Left ventricle myocardium superior (tissue), 1 donor: ENCODE measurements at regions of chr1 and their contacts with region 1.

Region 1: GRCh38 chr1:61097317-61097716 is 15.0 kb downstream of the NFIA start:
- DNase-seq: no peak
- ATAC-seq: no peak

Region 2: GRCh38 chr1:61013189-61013945 is 84.0 kb before region 1 on chr1:
- intact Hi-C with region 1: no loop called
- DNase-seq: peak; percentile 58
- ATAC-seq: peak; percentile 93

Region 3: DNA sequence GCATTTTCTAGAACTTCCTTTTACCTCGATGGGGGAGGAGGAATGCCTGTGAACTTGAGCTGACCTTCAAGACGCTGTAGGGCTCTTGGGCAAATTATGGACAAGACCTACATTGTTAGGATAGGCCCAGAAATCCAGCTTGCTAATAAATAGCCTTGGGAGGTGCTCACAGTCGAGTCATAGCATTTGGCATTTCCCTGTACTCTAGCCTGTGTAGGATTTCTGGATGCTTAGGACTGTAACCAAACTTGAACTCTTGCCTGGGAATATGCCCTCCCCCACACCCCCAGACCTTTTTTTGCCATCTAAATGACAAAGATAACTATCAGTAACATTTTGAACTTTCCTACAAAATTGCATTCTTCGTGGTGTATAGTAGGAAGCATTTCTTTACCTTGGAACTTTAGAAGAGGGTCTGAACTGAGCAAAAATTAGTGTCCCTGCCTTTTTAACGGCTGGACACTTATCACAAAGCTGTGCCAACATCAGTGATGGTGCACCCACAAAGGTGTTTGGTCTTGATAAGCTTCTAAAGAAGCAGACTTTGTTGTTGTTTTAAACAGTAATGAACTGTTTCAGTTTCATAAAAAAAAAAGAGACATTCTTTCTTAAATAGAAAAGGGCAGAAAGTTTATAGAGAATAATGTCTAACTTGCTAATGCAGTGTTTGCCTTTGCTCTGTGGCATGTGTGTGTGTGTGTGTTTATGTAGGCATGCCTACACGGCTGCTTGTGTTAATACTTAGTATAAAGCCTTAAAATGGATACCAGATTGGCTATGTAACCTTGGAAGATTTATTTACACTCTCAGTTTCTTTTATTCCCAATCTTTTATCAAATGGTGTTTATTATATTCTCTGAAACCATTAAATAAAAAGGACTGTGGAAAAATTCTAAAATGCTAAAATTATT is 73.3 kb after region 1 on chr1:
- intact Hi-C with region 1: loop called (anchors 10 kb)
- DNase-seq: no peak
- ATAC-seq: peak; percentile 44